ENCODE measurements at regions of chr4 and their contacts with region 1.

Region 1: GRCh38 chr4:25312496-25313200 is at the start of gene ZCCHC4:
- DNase-seq: peak; percentile 86 to 92
- ATAC-seq: peak; percentile 100
- H3K4me3 ChIP-seq: peak within 1 kb of the TSS; percentile 90
- H3K27ac ChIP-seq: peak within 1 kb of the TSS; percentile 70
- H3K4me1 ChIP-seq: peaks cover 9% of the 10 kb centered on the region
- H3K27me3 ChIP-seq: no peaks in the 10 kb centered on the region
- CTCF ChIP-seq: peak; percentile 97
- total RNA-seq, gene ZCCHC4: 4.4 to 7.9 (median 6.2) TPM

Region 2: DNA sequence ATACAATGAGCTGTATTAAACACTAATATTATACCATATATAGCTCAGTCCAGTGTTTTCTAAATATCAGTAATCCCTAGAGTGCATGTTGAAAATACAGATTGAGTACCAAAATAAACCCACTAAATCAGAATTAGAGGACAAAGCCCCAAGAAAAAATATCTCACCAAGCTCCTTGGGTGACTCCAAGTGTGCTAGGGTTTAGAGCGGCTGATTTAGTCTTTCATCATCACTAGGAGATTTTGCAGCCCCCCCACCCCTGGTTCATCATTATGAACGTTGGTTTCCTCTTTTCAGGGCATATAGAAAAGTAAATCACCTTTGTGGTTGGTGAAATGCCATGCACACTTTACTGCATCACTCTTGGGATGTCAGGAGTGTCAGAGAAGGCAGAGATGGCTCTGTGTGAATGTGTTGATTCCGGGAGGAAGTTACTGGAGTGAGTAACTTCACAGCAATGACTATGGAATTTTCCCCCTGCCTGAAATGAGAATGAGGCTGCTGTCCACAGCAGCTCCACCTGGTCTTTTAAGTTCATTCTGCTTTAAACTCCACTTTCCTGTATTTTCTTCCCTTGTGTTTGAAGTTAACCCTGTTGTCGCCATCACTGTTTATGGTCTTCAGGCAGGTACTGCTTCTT is 39.2 kb after region 1 on chr4:
- intact Hi-C with region 1: no loop called
- DNase-seq: no peak
- ATAC-seq: no peak
- H3K4me3 ChIP-seq: no peak overlapping the region
- H3K27ac ChIP-seq: no peak overlapping the region
- H3K4me1 ChIP-seq: no peaks in the 10 kb centered on the region
- H3K27me3 ChIP-seq: no peaks in the 10 kb centered on the region
- CTCF ChIP-seq: no peak

Region 3: GRCh38 chr4:25376754-25377571 is 64.3 kb after region 1 on chr4 and contains the start of gene ANAPC4:
- intact Hi-C with region 1: loop called in 1 of 2 experiments (anchors 5 kb)
- DNase-seq: peak; percentile 97
- ATAC-seq: peak; percentile 94 to 98 (median 97)
- H3K4me3 ChIP-seq: peak within 1 kb of the TSS; percentile 98
- H3K27ac ChIP-seq: peak within 1 kb of the TSS; percentile 81
- H3K4me1 ChIP-seq: peaks cover 19% of the 10 kb centered on the region
- H3K27me3 ChIP-seq: no peaks in the 10 kb centered on the region
- CTCF ChIP-seq: no peak
- total RNA-seq, gene ANAPC4: 9.0 to 14.7 (median 12.6) TPM

Region 4: GRCh38 chr4:25884031-25884782 is 571.6 kb after region 1 on chr4:
- intact Hi-C with region 1: no loop called
- DNase-seq: no peak
- ATAC-seq: no peak
- H3K4me3 ChIP-seq: no peak overlapping the region
- H3K27ac ChIP-seq: no peak overlapping the region
- H3K4me1 ChIP-seq: no peaks in the 10 kb centered on the region
- H3K27me3 ChIP-seq: no peaks in the 10 kb centered on the region
- CTCF ChIP-seq: no peak

Measured in psoas muscle (tissue), 8 donors.